Right lobe of liver (tissue), 6 donors: ENCODE measurements at regions of chr15 and their contacts with region 1.

Region 1: GRCh38 chr15:95365511-95366107 is 964.9 kb upstream of the NR2F2 start:
- DNase-seq: peak in 1 of 3 donors; percentile 20
- ATAC-seq: peak; percentile 73 to 91 (median 86)
- H3K4me3 ChIP-seq: no peak overlapping the region
- H3K27ac ChIP-seq: peak overlapping the region in 2 of 3 donors; percentile 8 to 28
- H3K4me1 ChIP-seq: no peaks in the 10 kb centered on the region
- H3K27me3 ChIP-seq: no peaks in the 10 kb centered on the region
- CTCF ChIP-seq: no peak
- POLR2A ChIP-seq: no peak

Region 2: DNA sequence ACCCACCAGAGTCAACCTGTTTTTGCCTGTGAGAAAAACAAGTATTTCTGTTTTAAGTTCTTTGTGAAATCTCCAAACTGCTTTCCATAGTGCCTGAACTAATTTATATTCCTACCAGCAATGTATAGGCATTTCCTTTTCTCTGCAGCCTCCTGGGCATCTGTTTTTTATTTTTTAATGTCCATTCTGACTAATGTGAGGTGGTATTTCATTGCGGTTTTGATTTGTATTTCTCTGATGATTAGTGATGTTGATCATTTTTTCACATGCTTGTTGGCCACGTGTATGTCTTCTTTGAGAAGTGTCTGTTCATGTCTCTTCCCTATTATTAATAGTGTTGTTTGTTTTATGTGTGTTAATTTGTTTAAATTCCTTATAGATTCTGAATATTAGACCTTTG is 313.7 kb before region 1 on chr15:
- intact Hi-C with region 1: no loop called
- DNase-seq: no peak
- ATAC-seq: no peak
- H3K4me3 ChIP-seq: no peak overlapping the region
- H3K27ac ChIP-seq: no peak overlapping the region
- H3K4me1 ChIP-seq: no peaks in the 10 kb centered on the region
- H3K27me3 ChIP-seq: no peaks in the 10 kb centered on the region
- CTCF ChIP-seq: no peak
- POLR2A ChIP-seq: no peak

Region 3: DNA sequence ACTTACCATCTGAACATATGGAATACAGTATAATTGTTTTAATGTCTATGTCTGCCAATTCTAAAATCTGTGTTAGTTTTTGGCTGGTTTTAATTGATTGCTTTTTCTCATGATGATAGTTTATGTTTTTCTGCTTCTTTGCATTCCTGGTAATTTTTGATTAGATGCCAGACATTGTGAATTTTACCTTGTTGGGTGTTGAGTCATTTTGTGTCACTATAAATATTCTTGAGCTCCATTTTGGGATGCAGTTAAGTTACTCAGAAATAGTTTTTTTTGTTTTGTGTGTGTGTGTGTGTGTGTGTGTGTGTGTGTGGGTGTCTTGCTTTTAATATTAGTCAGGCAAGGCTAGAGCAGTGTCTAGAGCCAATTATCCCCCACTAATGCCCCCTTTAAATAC is 146.1 kb after region 1 on chr15:
- intact Hi-C with region 1: no loop called
- DNase-seq: no peak
- ATAC-seq: no peak
- H3K4me3 ChIP-seq: no peak overlapping the region
- H3K27ac ChIP-seq: no peak overlapping the region
- H3K4me1 ChIP-seq: no peaks in the 10 kb centered on the region
- H3K27me3 ChIP-seq: no peaks in the 10 kb centered on the region
- CTCF ChIP-seq: no peak
- POLR2A ChIP-seq: no peak

Region 4: GRCh38 chr15:95826412-95827195 is 461.0 kb after region 1 on chr15:
- intact Hi-C with region 1: loop called in 1 of 2 experiments (anchors 10 kb)
- DNase-seq: no peak
- ATAC-seq: peak; percentile 59 to 73 (median 69)
- H3K4me3 ChIP-seq: no peak overlapping the region
- H3K27ac ChIP-seq: no peak overlapping the region
- H3K4me1 ChIP-seq: no peaks in the 10 kb centered on the region
- H3K27me3 ChIP-seq: no peaks in the 10 kb centered on the region
- CTCF ChIP-seq: peak; percentile 35 to 48 (median 46)
- POLR2A ChIP-seq: no peak